ENCODE measurements at regions of chr11 and their contacts with region 1.

Region 1: GRCh38 chr11:124763156-124763947 is 1.3 kb upstream of the ESAM start:
- DNase-seq: no peak
- ATAC-seq: peak; percentile 67
- H3K4me3 ChIP-seq: peak overlapping the region; percentile 59 to 88
- H3K27ac ChIP-seq: peak overlapping the region; percentile 37; the same call in 1 of the 2 replicates
- H3K4me1 ChIP-seq: peaks cover 3% of the 10 kb centered on the region; the same call in 1 of the 2 replicates
- H3K27me3 ChIP-seq: no peaks in the 10 kb centered on the region
- CTCF ChIP-seq: peak; percentile 96

Region 2: DNA sequence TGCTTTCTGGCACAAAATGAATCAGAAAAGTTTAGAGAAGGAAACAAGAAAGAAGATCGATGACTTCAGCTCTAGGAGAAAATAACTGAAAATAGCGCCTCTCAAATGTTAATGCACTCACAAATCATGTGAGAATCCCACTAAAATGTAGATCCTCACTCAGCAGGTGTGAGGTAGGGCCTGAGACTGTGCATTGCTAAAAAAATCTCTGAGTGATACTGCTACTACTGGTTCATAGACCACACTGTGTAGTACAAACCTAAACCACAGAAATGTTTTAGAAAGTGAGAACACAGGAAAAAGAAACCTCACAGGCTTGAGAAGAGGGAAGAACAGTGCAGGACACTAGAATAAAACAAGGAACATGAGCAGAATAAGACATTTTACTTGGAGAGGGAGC is 859.4 kb before region 1 on chr11:
- CTCF ChIA-PET with region 1: no interaction called
- POLR2A ChIA-PET with region 1: no interaction called
- in situ Hi-C with region 1: no loop called
- intact Hi-C with region 1: no loop called
- DNase-seq: no peak
- ATAC-seq: no peak
- H3K4me3 ChIP-seq: no peak overlapping the region
- H3K27ac ChIP-seq: no peak overlapping the region
- H3K4me1 ChIP-seq: no peaks in the 10 kb centered on the region
- H3K27me3 ChIP-seq: no peaks in the 10 kb centered on the region
- CTCF ChIP-seq: no peak

Region 3: DNA sequence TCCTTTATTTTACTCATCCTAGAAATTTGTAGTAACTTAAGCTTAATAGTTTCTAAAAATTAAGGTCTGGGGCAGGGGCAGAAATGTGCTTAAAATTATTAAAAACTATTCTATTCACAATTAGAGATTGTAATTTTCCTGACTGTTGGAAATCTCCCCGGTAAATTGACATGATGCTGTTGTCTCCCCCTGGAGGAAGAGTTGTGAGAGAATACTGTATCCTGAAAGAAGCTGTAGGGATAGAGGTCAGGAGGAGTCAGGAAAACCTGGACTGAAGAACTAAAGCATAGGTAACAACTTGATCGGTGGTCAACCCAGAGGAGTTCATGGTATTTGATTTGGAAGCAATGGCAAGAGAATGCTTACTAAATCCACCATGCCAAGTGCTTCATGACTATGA is 14.9 kb after region 1 on chr11:
- CTCF ChIA-PET with region 1: interaction called, 10 read pairs
- POLR2A ChIA-PET with region 1: no interaction called
- in situ Hi-C with region 1: no loop called
- intact Hi-C with region 1: no loop called
- DNase-seq: no peak
- ATAC-seq: 0 out of 2 replicates have a peak, but pooled peaks have one; percentile 51
- H3K4me3 ChIP-seq: no peak overlapping the region
- H3K27ac ChIP-seq: no peak overlapping the region
- H3K4me1 ChIP-seq: no peaks in the 10 kb centered on the region
- H3K27me3 ChIP-seq: no peaks in the 10 kb centered on the region
- CTCF ChIP-seq: peak; percentile 50

Region 4: GRCh38 chr11:124800226-124800929 is 37.0 kb after region 1 on chr11 and contains the start of gene MSANTD2:
- CTCF ChIA-PET with region 1: no interaction called
- POLR2A ChIA-PET with region 1: no interaction called
- in situ Hi-C with region 1: no loop called
- intact Hi-C with region 1: loop called (anchors 5 kb)
- DNase-seq: peak; percentile 17
- ATAC-seq: peak; percentile 98
- H3K4me3 ChIP-seq: peak within 1 kb of the TSS; percentile 75 to 84
- H3K27ac ChIP-seq: peak within 1 kb of the TSS; percentile 96
- H3K4me1 ChIP-seq: peaks cover 23% of the 10 kb centered on the region
- H3K27me3 ChIP-seq: no peaks in the 10 kb centered on the region
- CTCF ChIP-seq: no peak
- total RNA-seq, gene MSANTD2: 20.5 TPM

Region 5: GRCh38 chr11:124865921-124866583 is 102.7 kb after region 1 on chr11:
- CTCF ChIA-PET with region 1: interaction called, 12 read pairs
- POLR2A ChIA-PET with region 1: no interaction called
- in situ Hi-C with region 1: no loop called
- intact Hi-C with region 1: no loop called
- DNase-seq: no peak
- ATAC-seq: peak; percentile 46; the same call in 1 of the 2 replicates
- H3K4me3 ChIP-seq: peak overlapping the region; percentile 21 to 43
- H3K27ac ChIP-seq: no peak overlapping the region
- H3K4me1 ChIP-seq: peaks cover 28% of the 10 kb centered on the region
- H3K27me3 ChIP-seq: peaks cover 82% of the 10 kb centered on the region
- CTCF ChIP-seq: peak; percentile 95